Activated CD4-positive, alpha-beta T cell treated with anti-CD3 and anti-CD28 coated beads, Interleukin-2, amount 10 ng/mL, durations not matched to agents 24 days and 14 days (primary cell): ENCODE measurements at regions of chr16 and their contacts with region 1.

Region 1: DNA sequence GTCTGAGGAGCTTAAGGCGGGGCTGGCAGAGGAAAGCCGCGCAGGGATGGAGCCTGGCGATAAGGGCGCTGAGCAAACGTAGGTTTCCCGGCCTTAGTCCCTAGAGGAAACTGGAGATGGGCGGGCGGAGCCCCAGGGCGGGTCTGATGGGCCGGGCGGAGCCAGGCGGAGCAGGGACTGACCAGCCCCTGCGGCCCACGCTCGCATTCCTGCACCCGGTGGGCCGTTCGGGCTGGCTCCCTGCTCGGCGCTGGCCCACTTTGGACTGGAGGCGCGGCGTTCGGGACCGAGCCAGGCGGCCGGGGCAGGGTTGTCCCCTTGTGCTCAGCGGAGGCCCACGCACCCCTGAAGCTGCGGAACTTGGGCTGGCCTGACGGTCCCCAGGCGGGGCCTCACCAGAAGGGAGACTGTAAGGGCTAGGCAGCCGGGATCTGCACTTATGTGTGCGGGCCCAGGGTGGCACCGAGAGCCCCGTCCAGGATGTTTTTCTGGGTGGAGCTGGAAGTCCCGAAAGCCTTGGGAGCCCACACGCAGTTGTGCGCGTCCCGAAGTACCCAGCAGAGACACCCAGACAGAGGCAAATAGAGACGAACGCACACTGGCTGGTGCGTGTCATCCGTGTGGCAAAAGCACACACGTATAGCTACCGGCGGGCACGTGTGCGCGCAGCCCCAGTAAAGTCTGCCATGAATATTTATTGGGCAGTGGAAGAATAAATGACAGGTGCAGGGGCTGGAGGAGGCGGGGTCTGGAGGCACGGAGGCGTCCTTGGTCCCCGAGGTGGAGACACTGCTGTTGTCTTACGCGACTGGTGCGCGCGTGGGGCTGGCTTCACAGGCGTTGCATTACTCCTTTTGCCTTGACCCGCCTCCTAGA is 1.4 kb downstream of the PYDC1 start:
- DNase-seq: peak; percentile 74
- H3K4me3 Mint-ChIP-seq: peak overlapping the region; percentile 84
- H3K27ac Mint-ChIP-seq: peak overlapping the region; percentile 51
- H3K4me1 Mint-ChIP-seq: peaks cover 21% of the 10 kb centered on the region
- H3K27me3 Mint-ChIP-seq: peaks cover 41% of the 10 kb centered on the region

Region 2: DNA sequence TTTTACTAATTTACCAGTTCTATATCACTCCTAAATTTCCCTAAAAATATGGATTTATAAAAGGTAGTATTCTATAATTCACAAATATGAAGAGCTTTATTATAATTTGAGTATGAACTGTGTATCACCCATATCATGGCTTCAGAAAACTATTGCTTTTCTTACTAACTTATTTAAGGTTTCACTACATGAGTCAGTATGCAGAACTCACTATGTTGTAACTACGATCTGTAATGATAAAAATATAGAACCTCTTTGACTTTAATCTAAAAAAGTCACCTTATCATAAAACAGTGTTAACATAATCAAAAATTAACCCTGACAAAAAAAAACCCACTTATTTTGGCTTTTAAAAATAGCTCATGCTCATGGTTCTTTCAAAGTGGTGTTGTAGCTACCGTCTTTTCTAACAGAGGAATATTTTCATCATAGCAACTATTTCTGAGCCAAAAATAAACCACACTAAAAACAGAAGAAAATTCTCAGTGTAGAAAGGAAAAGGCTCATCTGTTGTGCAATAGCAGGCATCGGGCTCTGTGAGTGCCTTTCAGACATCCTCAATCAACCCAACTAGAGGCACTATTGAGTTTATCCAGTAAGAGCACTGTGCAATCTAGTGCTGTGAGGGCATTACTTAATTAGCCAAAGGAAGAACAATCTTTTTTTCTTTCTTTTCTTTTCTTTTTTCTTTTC is 86.3 kb after region 1 on chr16:
- intact Hi-C with region 1: loop called (anchors 5 kb)
- DNase-seq: peak; percentile 64
- H3K4me3 Mint-ChIP-seq: no peak overlapping the region
- H3K27ac Mint-ChIP-seq: peak overlapping the region; percentile 57
- H3K4me1 Mint-ChIP-seq: peaks cover 8% of the 10 kb centered on the region
- H3K27me3 Mint-ChIP-seq: peaks cover 25% of the 10 kb centered on the region